H1 (cell line): ENCODE measurements at regions of chr6 and their contacts with region 1.

Region 1: GRCh38 chr6:35731736-35732532 is 4.9 kb upstream of the ARMC12 start:
- DNase-seq: peak in 1 of 2 experiments; percentile 95
- H3K4me3 ChIP-seq: peak overlapping the region; percentile 43 to 91 (median 70)
- H3K27ac ChIP-seq: peak overlapping the region; percentile 92
- H3K4me1 ChIP-seq: peaks cover 13 to 32% (median 25%) of the 10 kb centered on the region in 4 experiments
- H3K27me3 ChIP-seq: peaks cover 0 to 2% (median under 1%) of the 10 kb centered on the region in 4 experiments; a peak in 3 of 7 replicates
- CTCF ChIP-seq: no peak
- EP300 ChIP-seq: peak in 1 of 2 experiments; percentile 89; a peak in 2 of 3 replicates
- POLR2A ChIP-seq: no peak
- RAD21 ChIP-seq: peak in 1 of 2 experiments; percentile 6; a peak in 1 of 4 replicates

Region 2: DNA sequence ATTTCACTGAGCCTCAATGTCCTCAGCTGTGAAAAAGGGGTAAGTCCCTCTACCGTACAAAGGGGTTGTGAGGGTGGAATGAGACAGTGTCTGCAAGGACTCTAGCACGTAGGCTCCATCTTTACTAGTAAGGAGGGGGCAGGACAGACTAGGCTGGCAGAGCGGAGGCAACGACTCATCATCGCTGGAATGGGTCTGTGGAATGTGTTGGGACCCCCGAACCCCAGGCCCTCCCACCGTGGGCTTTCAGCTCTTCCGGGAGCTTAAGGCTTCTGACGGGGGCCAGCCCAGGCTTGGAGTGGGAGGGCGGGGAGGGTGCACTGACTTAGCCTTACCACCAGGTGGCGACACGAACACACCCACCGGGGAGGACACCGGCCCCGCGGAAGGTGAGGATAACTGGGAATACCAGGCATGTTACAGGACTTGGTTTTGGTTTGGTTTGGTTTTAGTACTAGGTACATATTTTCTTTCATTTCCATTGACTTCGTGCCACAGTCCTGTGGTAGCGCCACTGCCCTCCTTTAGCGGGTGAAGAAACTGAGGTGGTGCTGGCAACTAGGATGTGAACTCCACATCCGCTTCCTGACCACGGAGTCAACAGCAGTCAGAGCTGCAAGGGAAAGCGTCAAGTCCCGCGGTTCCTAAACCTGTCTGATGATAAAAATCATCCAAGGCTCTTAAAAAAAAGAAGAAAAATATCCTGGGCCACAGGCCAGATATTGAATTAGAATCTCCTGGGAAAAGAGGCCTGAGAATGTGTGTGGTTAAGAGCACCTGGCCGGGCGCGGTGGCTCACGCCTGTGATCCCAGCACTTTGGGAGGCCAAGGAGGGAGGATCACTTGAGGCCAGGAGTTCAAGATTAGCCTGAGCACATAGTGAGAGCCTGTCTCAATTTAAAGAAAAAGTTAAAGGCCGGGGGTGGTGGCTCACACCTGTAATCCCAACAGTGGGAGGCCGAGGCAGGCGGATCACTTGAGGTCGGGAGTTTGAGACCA is 209.0 kb before region 1 on chr6:
- CTCF ChIA-PET with region 1: interaction called, 15 read pairs
- POLR2A ChIA-PET with region 1: no interaction called
- DNase-seq: peak; percentile 53 to 91
- H3K4me3 ChIP-seq: no peak overlapping the region
- H3K27ac ChIP-seq: no peak overlapping the region
- H3K4me1 ChIP-seq: peaks cover 0 to 13% (median 8%) of the 10 kb centered on the region in 4 experiments; a peak in 6 of 7 replicates
- H3K27me3 ChIP-seq: 0 out of 7 replicates have a peak, but pooled peaks cover 0 to 2% (median 0%) of the 10 kb centered on the region in 4 experiments
- CTCF ChIP-seq: peak; percentile 94 to 98 (median 94)
- EP300 ChIP-seq: no peak
- POLR2A ChIP-seq: no peak
- RAD21 ChIP-seq: peak; percentile 92 to 96

Region 3: DNA sequence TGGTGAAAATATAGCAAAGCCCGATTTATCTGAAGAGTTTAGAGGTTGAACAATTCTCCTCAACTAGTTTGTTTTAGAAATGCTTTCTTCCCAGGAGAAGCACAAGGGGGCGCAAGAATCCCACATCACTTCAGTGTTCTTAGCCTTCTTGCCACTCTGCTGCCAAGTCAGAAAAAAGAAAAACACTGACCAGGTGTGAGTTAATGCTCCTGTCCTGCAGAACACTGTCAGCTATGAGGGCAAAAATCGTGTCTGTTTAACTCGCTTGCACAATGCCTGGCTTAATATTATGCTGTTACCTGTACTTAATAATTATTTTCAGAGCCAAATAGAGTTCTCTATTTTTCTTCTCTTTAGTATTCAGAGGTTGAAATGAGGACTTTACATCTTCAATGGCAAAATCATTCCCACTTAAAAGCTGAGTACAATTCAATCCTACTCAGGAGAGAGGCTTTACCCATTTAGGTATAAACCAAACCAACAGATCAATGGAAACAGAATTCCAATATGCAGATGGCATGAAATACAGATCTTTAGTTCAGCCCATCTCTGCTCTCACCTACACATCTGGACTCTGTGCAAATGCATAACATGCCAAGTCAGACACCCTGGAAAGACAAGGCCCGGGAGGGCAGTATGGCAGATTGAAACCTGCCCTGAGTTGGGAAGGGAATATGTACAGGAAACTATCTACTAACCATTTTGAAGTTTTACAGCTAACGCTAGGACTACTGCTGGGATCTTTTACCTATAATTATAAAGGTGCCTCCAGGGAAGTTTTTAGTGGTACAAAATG is 147.8 kb before region 1 on chr6:
- CTCF ChIA-PET with region 1: interaction called, 84 read pairs
- POLR2A ChIA-PET with region 1: no interaction called
- DNase-seq: peak; percentile 23 to 74
- H3K4me3 ChIP-seq: no peak overlapping the region
- H3K27ac ChIP-seq: no peak overlapping the region
- H3K4me1 ChIP-seq: no peaks in the 10 kb centered on the region
- H3K27me3 ChIP-seq: no peaks in the 10 kb centered on the region
- CTCF ChIP-seq: peak in 2 of 3 experiments; percentile 80 to 92; a peak in 3 of 4 replicates
- EP300 ChIP-seq: no peak
- POLR2A ChIP-seq: no peak
- RAD21 ChIP-seq: peak; percentile 94 to 96

Region 4: DNA sequence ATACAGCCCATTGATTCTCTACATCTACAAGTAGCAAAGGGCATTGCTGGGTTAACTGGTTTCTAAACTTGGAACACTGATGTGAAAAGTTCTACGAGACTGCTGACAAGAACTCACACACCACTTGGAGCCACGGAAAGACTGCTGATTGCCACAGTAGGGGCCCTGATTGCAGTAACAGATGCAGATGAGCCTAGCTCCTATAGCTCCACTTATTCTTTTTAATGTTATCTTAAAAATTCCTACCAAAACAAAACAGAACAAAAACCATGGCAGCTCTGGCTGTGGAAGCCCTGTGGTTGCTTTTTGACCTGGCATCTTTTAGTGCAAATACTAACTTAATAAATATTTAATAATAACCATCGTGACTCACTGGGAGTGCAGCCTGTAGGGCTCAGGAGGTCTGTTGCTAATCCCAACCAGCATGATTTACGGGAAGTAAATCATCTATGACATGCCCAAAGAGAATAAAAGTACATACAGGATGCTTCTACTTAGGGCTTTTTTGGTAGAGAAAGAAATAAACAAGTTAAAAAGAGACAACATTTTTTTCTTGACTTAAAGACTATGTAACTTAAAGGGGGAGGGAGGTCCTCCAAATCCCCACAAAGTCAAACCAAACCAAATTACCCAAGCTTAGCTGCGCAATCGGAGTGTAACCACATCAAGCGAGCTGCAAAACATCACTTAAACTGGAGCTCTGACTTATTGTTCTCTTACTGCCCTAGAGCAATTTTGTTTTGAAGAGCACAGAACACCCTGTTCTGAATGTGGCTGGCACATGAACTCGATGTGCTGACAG is 130.4 kb before region 1 on chr6:
- CTCF ChIA-PET with region 1: interaction called, 26 read pairs
- POLR2A ChIA-PET with region 1: interaction called, 3 read pairs
- DNase-seq: peak in 1 of 2 experiments; percentile 9
- H3K4me3 ChIP-seq: no peak overlapping the region
- H3K27ac ChIP-seq: no peak overlapping the region
- H3K4me1 ChIP-seq: peaks cover 2 to 16% (median 7%) of the 10 kb centered on the region in 4 experiments; a peak in 5 of 7 replicates
- H3K27me3 ChIP-seq: no peaks in the 10 kb centered on the region
- CTCF ChIP-seq: no peak
- EP300 ChIP-seq: no peak
- POLR2A ChIP-seq: no peak
- RAD21 ChIP-seq: no peak

Region 5: GRCh38 chr6:35663447-35664235 is 68.3 kb before region 1 on chr6:
- CTCF ChIA-PET with region 1: interaction called, 13 read pairs
- POLR2A ChIA-PET with region 1: interaction called, 4 read pairs
- DNase-seq: no peak
- H3K4me3 ChIP-seq: no peak overlapping the region
- H3K27ac ChIP-seq: no peak overlapping the region
- H3K4me1 ChIP-seq: peaks cover 2 to 8% (median 4%) of the 10 kb centered on the region in 4 experiments; a peak in 4 of 7 replicates
- H3K27me3 ChIP-seq: no peaks in the 10 kb centered on the region
- CTCF ChIP-seq: no peak
- EP300 ChIP-seq: no peak
- POLR2A ChIP-seq: no peak
- RAD21 ChIP-seq: no peak

Region 6: DNA sequence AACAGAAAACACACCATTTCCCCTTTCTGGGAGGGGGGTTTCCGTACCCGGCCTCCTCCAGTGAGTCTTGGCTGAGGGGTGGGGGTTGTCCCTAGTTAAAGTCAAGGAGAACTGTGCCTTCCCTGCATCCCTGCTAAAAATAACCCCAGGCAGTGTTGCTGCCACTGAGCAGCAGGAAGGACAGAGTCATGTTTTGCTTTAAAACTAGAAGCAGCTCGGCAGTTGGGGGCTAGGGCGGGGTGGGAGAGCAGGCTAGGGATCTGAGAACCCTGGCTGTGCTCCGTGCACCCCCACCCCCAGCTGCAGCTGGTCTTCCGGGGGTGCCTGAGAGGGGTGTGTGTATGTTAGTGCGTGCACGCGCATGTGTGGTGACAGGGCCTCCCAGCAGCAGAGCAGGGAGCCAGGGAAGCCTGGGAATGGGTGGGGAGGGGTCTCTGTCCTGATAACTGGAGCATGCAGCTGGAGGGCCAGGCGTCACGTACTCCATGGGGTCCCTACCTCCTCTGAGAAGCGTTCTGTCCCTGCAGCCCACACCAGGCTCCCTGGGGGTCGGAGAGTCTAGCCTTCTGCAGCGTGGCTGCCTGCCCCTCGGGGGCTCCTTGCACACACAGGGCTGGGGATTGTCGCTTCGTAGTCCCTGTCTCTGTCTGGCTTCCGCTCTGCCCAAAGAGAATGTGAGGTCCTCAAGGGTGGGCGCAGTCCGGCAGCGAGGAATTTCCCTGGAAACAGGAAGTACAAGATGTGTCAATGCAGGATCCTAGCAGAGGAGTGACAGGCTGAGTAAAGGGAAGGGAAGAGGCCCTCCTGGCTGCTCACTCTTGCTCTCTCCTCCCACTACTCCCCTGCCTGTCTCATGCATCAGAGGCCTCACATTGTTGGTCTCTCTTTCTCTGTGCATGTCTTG is 11.9 kb before region 1 on chr6:
- CTCF ChIA-PET with region 1: interaction called, 30 read pairs
- POLR2A ChIA-PET with region 1: interaction called, 16 read pairs
- DNase-seq: peak in 1 of 2 experiments; percentile 69
- H3K4me3 ChIP-seq: no peak overlapping the region
- H3K27ac ChIP-seq: no peak overlapping the region
- H3K4me1 ChIP-seq: peaks cover 14 to 40% (median 28%) of the 10 kb centered on the region in 4 experiments
- H3K27me3 ChIP-seq: 0 out of 7 replicates have a peak, but pooled peaks cover 0 to 3% (median 0%) of the 10 kb centered on the region in 4 experiments
- CTCF ChIP-seq: no peak
- EP300 ChIP-seq: no peak
- POLR2A ChIP-seq: no peak
- RAD21 ChIP-seq: no peak

Region 7: DNA sequence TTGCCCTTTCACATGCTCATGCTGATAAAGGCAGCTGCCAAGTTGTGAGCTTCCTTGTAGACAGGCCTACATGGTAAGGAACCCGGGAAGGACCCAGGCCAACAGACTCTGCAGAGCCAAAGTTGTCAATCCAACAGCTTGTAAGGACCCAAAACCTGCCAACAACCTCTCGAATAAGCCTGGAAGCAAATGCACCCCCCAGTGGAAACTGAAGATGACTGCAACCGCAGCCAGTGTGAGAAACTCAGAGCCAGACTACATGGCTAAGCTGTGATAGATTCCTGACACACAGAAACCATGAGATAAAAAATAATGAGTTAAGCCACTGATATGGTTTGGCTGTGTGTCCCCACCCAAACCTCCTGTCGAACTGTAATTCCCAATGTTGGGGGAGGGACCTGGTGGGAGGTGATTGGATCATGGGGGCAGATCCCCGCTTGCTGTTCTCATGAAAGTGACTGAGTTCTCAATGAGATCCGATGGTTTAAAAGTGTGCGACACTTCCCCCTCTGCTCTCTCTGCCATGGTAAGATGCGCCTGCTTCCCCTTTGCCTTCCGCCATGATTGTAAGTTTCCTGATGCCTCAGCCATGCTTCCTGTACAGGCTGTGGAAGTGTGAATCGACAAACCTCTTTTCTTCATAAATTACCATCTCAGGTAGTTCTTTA is 25.7 kb after region 1 on chr6:
- CTCF ChIA-PET with region 1: interaction called, 137 read pairs
- POLR2A ChIA-PET with region 1: interaction called, 84 read pairs
- DNase-seq: no peak
- H3K4me3 ChIP-seq: no peak overlapping the region
- H3K27ac ChIP-seq: no peak overlapping the region
- H3K4me1 ChIP-seq: peaks cover 5 to 18% (median 12%) of the 10 kb centered on the region in 4 experiments
- H3K27me3 ChIP-seq: no peaks in the 10 kb centered on the region
- CTCF ChIP-seq: peak; percentile 64 to 78 (median 71)
- EP300 ChIP-seq: no peak
- POLR2A ChIP-seq: no peak
- RAD21 ChIP-seq: peak; percentile 67 to 83